Activated naive CD4-positive, alpha-beta T cell treated with anti-CD3 and anti-CD28 coated beads for 36 hours (primary cell): ENCODE measurements at regions of chr16 and their contacts with region 1.

Region 1: DNA sequence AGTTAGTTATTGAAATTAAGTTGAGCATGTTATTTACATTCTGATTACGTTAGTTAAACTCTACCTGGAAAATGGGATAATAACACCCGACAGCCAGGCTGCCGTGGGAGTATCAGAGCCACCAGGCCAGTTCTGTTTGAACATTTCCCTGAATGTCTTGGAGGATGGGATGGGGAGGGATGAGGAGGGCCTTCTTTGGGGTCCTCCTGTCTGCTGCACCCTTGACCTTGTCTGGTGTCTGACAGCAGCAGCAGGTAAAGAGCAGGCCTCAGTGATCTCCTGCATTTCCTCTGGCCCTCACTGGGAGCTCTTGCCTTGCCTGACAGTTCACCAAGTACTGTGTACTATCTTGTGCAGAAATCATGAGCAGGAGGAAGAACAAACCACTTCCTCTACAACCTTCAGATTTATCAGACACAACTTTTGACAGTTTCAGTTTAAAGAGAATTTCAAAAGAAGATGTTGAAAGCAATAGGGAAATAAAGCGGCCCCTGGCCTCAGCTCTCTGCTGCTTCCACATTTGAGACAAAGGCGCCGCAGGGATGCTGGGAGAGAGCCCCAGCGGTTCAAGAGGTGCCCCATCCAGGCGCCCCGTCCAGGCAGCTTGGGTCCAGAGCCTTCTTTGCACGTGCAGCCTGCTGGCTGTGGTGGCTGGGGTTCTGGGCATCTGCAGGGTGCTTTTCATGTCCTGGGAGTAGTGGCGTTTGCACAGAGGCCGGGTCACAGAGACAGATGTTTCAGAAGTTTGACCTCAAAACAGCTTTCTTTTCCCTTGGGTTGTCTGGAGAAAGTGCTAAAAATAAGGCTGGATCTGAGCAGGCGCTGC is 25.3 kb downstream of the CMIP start:
- DNase-seq: peak; percentile 51
- H3K4me3 Mint-ChIP-seq: peak overlapping the region; percentile 10
- H3K27ac Mint-ChIP-seq: peak overlapping the region; percentile 82
- H3K4me1 Mint-ChIP-seq: peaks cover 68% of the 10 kb centered on the region
- H3K27me3 Mint-ChIP-seq: no peaks in the 10 kb centered on the region

Region 2: GRCh38 chr16:81421546-81421945 is 48.4 kb before region 1 on chr16:
- CTCF ChIA-PET with region 1: interaction called, 3 read pairs
- intact Hi-C with region 1: loop called (anchors 1 kb)
- DNase-seq: no peak
- H3K4me3 Mint-ChIP-seq: no peak overlapping the region
- H3K27ac Mint-ChIP-seq: no peak overlapping the region
- H3K4me1 Mint-ChIP-seq: peaks cover 9% of the 10 kb centered on the region
- H3K27me3 Mint-ChIP-seq: no peaks in the 10 kb centered on the region

Region 3: DNA sequence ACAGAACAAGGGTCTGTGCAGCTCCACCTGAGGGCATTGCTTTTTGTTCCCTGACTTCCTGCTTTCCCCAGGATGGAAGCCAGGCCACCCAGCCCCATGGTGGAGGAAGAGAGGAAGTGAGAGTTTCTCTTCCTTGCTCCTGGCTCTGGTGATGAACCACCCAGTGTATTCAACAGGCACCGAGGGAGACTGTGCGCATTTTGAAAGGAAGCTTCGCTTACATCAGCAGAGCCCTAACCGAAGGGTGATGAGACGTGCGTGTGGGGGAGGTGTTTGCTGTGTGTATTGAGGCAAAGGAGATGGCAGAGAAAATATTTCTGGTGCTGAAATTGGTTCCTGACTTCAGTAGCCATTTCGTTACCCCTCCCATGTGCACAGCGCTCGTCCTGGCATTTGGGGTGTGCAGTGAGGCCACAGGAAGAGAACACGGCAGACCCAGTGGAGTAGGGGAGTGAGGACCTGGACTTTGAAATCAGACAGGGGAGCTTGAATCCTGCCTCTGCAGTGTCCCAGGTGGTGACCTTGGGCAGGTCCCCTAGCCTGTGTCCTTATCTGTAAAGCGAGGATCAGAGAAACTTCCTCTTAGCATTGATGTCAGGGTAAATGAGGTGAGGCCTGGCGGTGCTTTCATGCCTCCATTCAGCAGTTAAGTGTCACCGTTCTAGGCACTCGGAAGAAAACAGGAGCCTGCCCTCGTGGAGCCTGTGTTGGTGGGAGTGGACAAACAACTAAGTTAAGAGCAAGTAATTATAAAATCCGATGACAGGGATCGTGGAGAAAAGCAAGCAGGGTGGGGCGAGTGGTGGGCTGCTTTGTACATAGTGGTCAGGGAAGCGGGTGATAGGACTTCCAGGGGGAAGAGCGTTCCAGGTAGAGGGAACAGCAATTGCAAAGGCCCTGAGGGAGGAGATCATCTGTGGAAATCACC is 17.9 kb before region 1 on chr16:
- CTCF ChIA-PET with region 1: interaction called, 3 read pairs
- intact Hi-C with region 1: loop called (anchors 1 kb)
- DNase-seq: peak; percentile 80
- H3K4me3 Mint-ChIP-seq: peak overlapping the region; percentile 67
- H3K27ac Mint-ChIP-seq: peak overlapping the region; percentile 85
- H3K4me1 Mint-ChIP-seq: peaks cover 62% of the 10 kb centered on the region
- H3K27me3 Mint-ChIP-seq: no peaks in the 10 kb centered on the region

Region 4: DNA sequence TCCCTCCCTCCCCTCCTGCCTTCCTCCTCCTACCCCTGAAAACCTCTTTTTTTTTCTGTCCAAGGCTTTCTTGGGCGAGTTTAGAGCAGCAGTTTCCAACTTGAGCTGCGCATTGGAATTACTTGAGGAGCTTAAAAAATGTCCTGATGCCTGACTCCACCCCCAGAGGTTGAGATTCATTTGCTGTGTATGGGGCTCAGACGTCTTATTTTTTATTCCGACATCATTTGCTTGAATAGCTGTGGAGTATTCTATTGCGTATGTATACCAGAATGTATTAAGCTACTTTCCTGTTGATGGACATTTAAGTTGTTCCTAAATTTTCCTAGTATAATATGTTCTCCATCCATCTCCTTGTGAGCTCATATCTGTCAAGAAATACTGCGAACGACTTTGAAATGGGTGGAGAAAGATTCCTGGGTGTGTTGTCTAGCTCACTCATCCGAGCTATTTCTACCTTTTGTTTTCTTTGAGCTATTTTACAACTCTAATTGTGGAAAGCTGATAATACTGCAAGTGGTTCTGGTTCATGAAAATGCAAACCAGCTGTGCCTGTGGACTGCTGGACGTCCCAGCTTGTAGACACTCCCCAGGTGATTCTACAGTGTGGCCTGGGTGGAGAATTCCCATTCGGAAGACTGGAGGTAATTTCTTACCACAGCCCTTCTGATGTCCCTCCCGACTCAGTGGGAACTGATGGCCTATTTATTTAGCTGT is 15.1 kb after region 1 on chr16:
- CTCF ChIA-PET with region 1: no interaction called
- intact Hi-C with region 1: no loop called
- DNase-seq: no peak
- H3K4me3 Mint-ChIP-seq: no peak overlapping the region
- H3K27ac Mint-ChIP-seq: no peak overlapping the region
- H3K4me1 Mint-ChIP-seq: peaks cover 20% of the 10 kb centered on the region
- H3K27me3 Mint-ChIP-seq: no peaks in the 10 kb centered on the region